HepG2 (cell line): ENCODE measurements at regions of chr2 and their contacts with region 1.

Region 1: GRCh38 chr2:20617892-20618467 is 32.9 kb downstream of the HS1BP3 start:
- DNase-seq: peak; percentile 94
- ATAC-seq: peak; percentile 92
- H3K4me3 ChIP-seq: no peak overlapping the region
- H3K27ac ChIP-seq: peak overlapping the region; percentile 95
- H3K4me1 ChIP-seq: peaks cover 63% of the 10 kb centered on the region
- H3K27me3 ChIP-seq: no peaks in the 10 kb centered on the region
- CTCF ChIP-seq: peak; percentile 60
- EP300 ChIP-seq: peak; percentile 49 to 56; a peak in 2 of 4 replicates
- POLR2A ChIP-seq: peak in 1 of 2 experiments; percentile 53; a peak in 1 of 4 replicates
- RAD21 ChIP-seq: peak; percentile 92

Region 2: GRCh38 chr2:20419007-20419576 is 198.9 kb before region 1 on chr2:
- CTCF ChIA-PET with region 1: no interaction called
- POLR2A ChIA-PET with region 1: interaction called, 11 read pairs
- in situ Hi-C with region 1: no loop called
- intact Hi-C with region 1: no loop called
- DNase-seq: peak; percentile 65
- ATAC-seq: peak; percentile 79
- H3K4me3 ChIP-seq: peak overlapping the region; percentile 38 to 68 (median 42); a peak in 5 of 6 replicates
- H3K27ac ChIP-seq: peak overlapping the region; percentile 61
- H3K4me1 ChIP-seq: peaks cover 95% of the 10 kb centered on the region
- H3K27me3 ChIP-seq: peaks cover 1 to 13% of the 10 kb centered on the region in 2 experiments
- CTCF ChIP-seq: no peak
- EP300 ChIP-seq: no peak
- POLR2A ChIP-seq: 0 out of 4 replicates have a peak, but pooled peaks of 1 of the 2 experiments have one; percentile 32
- RAD21 ChIP-seq: no peak

Region 3: GRCh38 chr2:20525041-20526035 is 92.6 kb before region 1 on chr2:
- CTCF ChIA-PET with region 1: no interaction called
- POLR2A ChIA-PET with region 1: interaction called, 10 read pairs
- in situ Hi-C with region 1: no loop called
- intact Hi-C with region 1: no loop called
- DNase-seq: peak; percentile 96
- ATAC-seq: peak; percentile 96
- H3K4me3 ChIP-seq: peak overlapping the region; percentile 2 to 56 (median 21); a peak in 5 of 6 replicates
- H3K27ac ChIP-seq: peak overlapping the region; percentile 69
- H3K4me1 ChIP-seq: peaks cover 81% of the 10 kb centered on the region
- H3K27me3 ChIP-seq: no peaks in the 10 kb centered on the region
- CTCF ChIP-seq: peak; percentile 80
- EP300 ChIP-seq: peak; percentile 48 to 53; a peak in 3 of 4 replicates
- POLR2A ChIP-seq: peak in 1 of 2 experiments; percentile 70; a peak in 2 of 4 replicates
- RAD21 ChIP-seq: peak; percentile 82

Region 4: DNA sequence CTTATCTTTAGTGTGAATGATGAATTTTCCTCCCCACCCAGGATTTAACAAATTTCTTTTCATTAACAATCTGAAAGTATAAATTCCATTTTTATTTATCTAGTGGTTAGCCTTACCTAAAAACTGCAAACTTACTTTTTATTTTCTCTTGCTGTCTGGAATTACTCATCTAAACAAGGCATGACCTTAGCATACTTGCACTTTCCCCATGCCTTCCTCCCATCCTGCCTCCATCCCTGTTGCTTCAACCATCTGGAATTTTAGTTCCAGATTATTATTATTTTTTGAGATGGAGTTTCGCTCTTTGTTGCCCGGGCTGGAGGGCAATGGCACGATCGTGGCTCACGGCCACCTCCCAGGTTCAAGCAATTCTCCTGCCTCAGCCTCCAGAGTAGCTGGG is 84.6 kb after region 1 on chr2:
- CTCF ChIA-PET with region 1: no interaction called
- POLR2A ChIA-PET with region 1: no interaction called
- in situ Hi-C with region 1: no loop called
- intact Hi-C with region 1: no loop called
- DNase-seq: no peak
- ATAC-seq: no peak
- H3K4me3 ChIP-seq: no peak overlapping the region
- H3K27ac ChIP-seq: no peak overlapping the region
- H3K4me1 ChIP-seq: peaks cover 8% of the 10 kb centered on the region
- H3K27me3 ChIP-seq: no peaks in the 10 kb centered on the region
- CTCF ChIP-seq: no peak
- EP300 ChIP-seq: no peak
- POLR2A ChIP-seq: no peak
- RAD21 ChIP-seq: no peak